CD4-positive, alpha-beta memory T cell (primary cell): ENCODE measurements at regions of chr22 and their contacts with region 1.

Region 1: DNA sequence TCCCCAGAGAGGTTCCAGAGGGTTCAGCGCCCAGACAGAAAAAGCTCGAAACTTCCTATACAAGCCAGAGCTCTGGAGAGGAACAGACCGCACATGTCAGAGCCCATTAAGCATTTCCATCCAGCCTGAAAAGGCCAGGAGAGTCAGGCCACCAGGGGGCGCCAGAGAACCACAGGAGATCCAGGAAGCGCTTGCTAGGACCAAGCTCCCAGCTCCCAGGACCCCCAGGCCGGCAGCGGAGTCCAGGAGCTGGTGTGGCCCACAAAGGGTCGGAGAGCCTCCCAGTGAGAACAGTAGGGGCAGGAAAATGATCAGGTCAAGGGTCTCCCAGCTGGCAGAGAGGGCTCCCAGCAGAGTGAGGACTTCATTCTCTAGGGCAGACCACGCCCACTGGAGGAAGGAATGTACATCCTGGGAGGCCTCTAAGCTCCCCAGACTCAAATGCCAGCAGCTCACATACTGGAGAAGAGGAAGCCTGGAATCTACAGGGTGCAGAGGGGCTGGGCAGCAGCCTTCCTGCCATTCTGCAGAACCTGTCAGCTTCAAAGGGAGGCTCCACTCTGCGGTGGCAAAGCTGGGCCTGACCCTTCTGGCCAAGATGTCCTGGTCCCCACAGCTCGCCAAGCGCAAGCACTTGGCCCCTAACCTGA is 2.1 kb upstream of the MEI1 start:
- DNase-seq: peak; percentile 81 to 87 (median 83)
- H3K4me3 ChIP-seq: no peak overlapping the region
- H3K4me3 Mint-ChIP-seq: peak overlapping the region; percentile 50 to 84 (median 74)
- H3K27ac ChIP-seq: peak overlapping the region; percentile 2
- H3K27ac Mint-ChIP-seq: peak overlapping the region in 6 of 7 donors; percentile 51 to 88 (median 80)
- H3K4me1 ChIP-seq: peaks cover 14% of the 10 kb centered on the region
- H3K4me1 Mint-ChIP-seq: peaks cover 9 to 21% (median 13%) of the 10 kb centered on the region in 4 donors
- H3K27me3 ChIP-seq: no peaks in the 10 kb centered on the region
- H3K27me3 Mint-ChIP-seq: no peaks in the 10 kb centered on the region

Region 2: GRCh38 chr22:41501209-41501608 is 196.0 kb before region 1 on chr22:
- CTCF ChIA-PET with region 1: no interaction called
- POLR2A ChIA-PET with region 1: no interaction called
- intact Hi-C with region 1: no loop called
- DNase-seq: peak in 1 of 5 donors; percentile 10
- H3K4me3 ChIP-seq: no peak overlapping the region
- H3K4me3 Mint-ChIP-seq: no peak overlapping the region
- H3K27ac ChIP-seq: no peak overlapping the region
- H3K27ac Mint-ChIP-seq: peak overlapping the region in 1 of 7 donors; percentile 37
- H3K4me1 ChIP-seq: no peaks in the 10 kb centered on the region
- H3K4me1 Mint-ChIP-seq: peaks cover 0 to 7% (median 0%) of the 10 kb centered on the region in 4 donors
- H3K27me3 ChIP-seq: no peaks in the 10 kb centered on the region
- H3K27me3 Mint-ChIP-seq: no peaks in the 10 kb centered on the region

Region 3: DNA sequence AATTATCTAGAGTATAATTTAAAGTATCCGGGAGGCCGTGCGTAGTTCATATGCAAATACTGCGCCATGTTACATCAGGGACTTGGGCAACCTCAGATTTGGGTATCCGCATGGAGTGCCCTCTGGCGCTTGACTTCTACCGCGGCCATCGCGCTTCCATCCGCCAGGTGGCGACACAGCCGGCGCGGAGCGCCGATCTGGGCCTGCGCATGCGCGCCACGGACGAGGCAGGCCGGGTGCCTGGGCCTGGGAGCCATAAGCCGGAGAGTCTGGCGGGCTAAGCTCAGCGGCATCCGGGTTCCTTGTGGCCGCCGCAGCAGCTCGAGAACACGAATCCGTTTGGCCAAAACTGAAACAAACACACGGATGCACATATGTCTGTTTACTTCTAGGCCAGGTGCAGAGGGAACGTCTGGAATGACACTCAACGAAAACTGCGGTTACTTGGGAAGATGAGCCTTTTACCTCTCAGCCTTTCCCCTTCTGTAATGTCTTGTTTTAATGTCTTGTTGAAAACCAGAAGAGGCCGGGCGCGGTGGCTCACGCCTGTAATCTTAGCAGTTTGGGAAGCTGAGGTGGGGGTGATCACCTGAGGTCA is 30.5 kb before region 1 on chr22:
- CTCF ChIA-PET with region 1: interaction called, 59 read pairs
- POLR2A ChIA-PET with region 1: interaction called, 26 read pairs
- intact Hi-C with region 1: loop called (anchors 1 kb)
- DNase-seq: peak; percentile 91 to 97 (median 96)
- H3K4me3 ChIP-seq: peak overlapping the region in 1 of 2 donors; percentile 39
- H3K4me3 Mint-ChIP-seq: peak overlapping the region; percentile 86 to 94 (median 88)
- H3K27ac ChIP-seq: peak overlapping the region; percentile 80
- H3K27ac Mint-ChIP-seq: peak overlapping the region; percentile 97 to 99 (median 98)
- H3K4me1 ChIP-seq: peaks cover 14% of the 10 kb centered on the region
- H3K4me1 Mint-ChIP-seq: peaks cover 4 to 14% (median 11%) of the 10 kb centered on the region in 4 donors
- H3K27me3 ChIP-seq: no peaks in the 10 kb centered on the region
- H3K27me3 Mint-ChIP-seq: no peaks in the 10 kb centered on the region

Region 4: DNA sequence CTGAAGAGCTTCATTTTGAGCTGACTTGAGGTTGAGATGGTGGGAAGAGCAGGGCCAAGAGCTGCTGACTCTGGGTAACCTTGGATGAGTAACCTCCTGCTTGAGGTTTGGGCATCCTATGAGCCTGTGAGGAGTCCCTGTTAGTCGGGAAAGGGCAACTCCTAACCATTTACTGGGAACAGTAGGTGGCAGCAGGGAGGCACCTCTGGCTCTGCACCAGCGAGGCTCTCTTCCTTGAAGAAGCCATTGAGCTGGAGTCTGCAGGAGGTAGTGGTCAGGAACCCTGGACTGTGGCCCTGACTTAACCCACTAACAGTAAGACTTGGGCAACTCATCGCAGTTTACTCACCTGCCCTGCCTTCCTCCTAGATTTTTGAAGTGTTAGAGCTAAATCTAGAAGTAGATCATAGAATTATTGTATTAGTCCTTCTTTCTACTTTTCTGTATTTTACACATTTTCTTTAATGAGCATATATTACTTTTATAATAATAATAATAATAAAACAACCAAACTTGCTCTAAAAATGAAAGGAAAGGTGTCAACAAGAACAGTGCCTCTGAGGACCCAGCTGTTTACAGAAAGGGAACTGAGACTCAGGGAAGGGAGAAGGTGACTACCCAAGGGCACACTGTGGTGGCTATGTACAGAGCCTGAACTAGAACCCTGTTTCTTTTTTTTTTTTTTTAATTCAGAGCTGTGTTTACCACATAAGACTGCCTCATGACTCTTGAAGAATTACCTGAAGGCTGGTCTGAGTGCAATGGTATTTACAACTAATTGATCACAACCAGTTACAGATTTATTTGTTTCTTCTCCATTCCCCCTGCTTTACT is 49.5 kb after region 1 on chr22:
- CTCF ChIA-PET with region 1: interaction called, 11 read pairs
- POLR2A ChIA-PET with region 1: interaction called, 3 read pairs
- intact Hi-C with region 1: no loop called
- DNase-seq: peak; percentile 48 to 66 (median 51)
- H3K4me3 ChIP-seq: no peak overlapping the region
- H3K4me3 Mint-ChIP-seq: no peak overlapping the region
- H3K27ac ChIP-seq: no peak overlapping the region
- H3K27ac Mint-ChIP-seq: peak overlapping the region in 1 of 7 donors; percentile 2
- H3K4me1 ChIP-seq: no peaks in the 10 kb centered on the region
- H3K4me1 Mint-ChIP-seq: peaks cover 0 to 5% (median 1%) of the 10 kb centered on the region in 4 donors
- H3K27me3 ChIP-seq: no peaks in the 10 kb centered on the region
- H3K27me3 Mint-ChIP-seq: peaks cover 0 to 2% of the 10 kb centered on the region in 2 donors

Region 5: GRCh38 chr22:41822317-41823060 is 125.2 kb after region 1 on chr22:
- CTCF ChIA-PET with region 1: interaction called, 10 read pairs
- POLR2A ChIA-PET with region 1: interaction called, 4 read pairs
- intact Hi-C with region 1: no loop called
- DNase-seq: peak; percentile 69 to 81 (median 72)
- H3K4me3 ChIP-seq: no peak overlapping the region
- H3K4me3 Mint-ChIP-seq: no peak overlapping the region
- H3K27ac ChIP-seq: peak overlapping the region; percentile 19
- H3K27ac Mint-ChIP-seq: peak overlapping the region; percentile 47 to 92 (median 76)
- H3K4me1 ChIP-seq: peaks cover 5% of the 10 kb centered on the region
- H3K4me1 Mint-ChIP-seq: peaks cover 5 to 14% (median 10%) of the 10 kb centered on the region in 4 donors
- H3K27me3 ChIP-seq: no peaks in the 10 kb centered on the region
- H3K27me3 Mint-ChIP-seq: no peaks in the 10 kb centered on the region

Region 6: GRCh38 chr22:41925655-41926460 is 228.6 kb after region 1 on chr22:
- CTCF ChIA-PET with region 1: interaction called, 22 read pairs
- POLR2A ChIA-PET with region 1: no interaction called
- intact Hi-C with region 1: no loop called
- DNase-seq: peak; percentile 73 to 82 (median 77)
- H3K4me3 ChIP-seq: peak overlapping the region in 1 of 2 donors; percentile 43
- H3K4me3 Mint-ChIP-seq: peak overlapping the region; percentile 73 to 87 (median 82)
- H3K27ac ChIP-seq: no peak overlapping the region
- H3K27ac Mint-ChIP-seq: peak overlapping the region; percentile 57 to 83 (median 71)
- H3K4me1 ChIP-seq: peaks cover 15% of the 10 kb centered on the region
- H3K4me1 Mint-ChIP-seq: peaks cover 3 to 25% (median 9%) of the 10 kb centered on the region in 4 donors
- H3K27me3 ChIP-seq: no peaks in the 10 kb centered on the region
- H3K27me3 Mint-ChIP-seq: no peaks in the 10 kb centered on the region

Region 7: DNA sequence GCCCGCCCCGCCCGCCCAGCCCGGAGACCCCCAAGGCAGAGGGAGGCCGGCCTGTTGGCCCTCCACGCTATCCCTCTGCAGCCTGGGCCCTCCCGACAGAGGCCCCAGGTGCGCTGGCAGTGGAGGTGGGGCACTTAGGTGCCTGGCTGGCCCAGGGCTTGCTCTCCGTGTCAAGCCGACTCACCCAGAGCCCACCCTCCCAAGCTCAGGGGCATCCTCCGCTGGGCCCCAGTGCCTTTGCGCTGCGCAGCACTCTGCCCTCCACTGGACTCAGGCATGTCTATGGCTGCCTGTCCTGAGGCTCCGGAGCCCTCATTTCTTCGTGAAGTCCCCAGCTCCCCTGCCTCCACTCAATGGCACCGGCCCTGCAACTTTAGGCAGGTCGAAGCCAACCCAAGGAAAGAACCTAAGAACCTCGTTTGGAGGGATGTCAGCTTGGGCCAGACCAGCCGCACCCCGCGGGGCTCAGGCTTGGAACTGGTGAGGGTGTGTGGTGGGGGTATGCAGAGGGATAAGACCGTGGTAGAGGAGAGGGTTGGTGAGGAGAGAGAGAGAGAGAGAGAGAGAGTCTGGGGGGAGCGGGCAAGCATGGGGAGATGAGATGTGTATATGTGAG is 260.8 kb after region 1 on chr22:
- CTCF ChIA-PET with region 1: interaction called, 17 read pairs
- POLR2A ChIA-PET with region 1: no interaction called
- intact Hi-C with region 1: loop called (anchors 1 kb)
- DNase-seq: no peak
- H3K4me3 ChIP-seq: no peak overlapping the region
- H3K4me3 Mint-ChIP-seq: no peak overlapping the region
- H3K27ac ChIP-seq: no peak overlapping the region
- H3K27ac Mint-ChIP-seq: peak overlapping the region in 1 of 7 donors; percentile 69
- H3K4me1 ChIP-seq: no peaks in the 10 kb centered on the region
- H3K4me1 Mint-ChIP-seq: peaks cover 3 to 5% (median 4%) of the 10 kb centered on the region in 4 donors
- H3K27me3 ChIP-seq: no peaks in the 10 kb centered on the region
- H3K27me3 Mint-ChIP-seq: peaks cover 0 to 1% of the 10 kb centered on the region in 2 donors